ENCODE measurements at regions of chr22 and their contacts with region 1.

Region 1: DNA sequence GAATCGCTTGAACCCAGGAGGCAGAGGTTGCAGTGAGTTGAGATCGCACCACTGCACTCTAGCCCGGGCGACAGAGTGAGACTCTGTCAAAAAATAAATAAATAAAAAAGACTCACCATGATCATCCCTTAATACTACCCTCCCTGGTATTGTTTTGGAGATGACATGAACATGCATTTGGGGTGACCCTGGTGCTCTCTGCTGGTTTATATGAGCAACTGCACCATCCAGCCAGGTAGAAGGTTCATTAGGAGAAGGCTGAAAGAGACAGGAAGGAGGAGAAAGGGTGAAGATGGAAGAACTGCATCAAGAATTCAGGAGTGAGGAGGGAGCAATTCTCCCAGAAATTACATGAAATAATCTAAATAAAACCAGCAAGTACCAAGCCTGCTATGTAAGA is 37.8 kb downstream of the SLC5A1 start:
- DNase-seq: peak; percentile 60
- ATAC-seq: peak; percentile 69
- H3K4me3 ChIP-seq: no peak overlapping the region
- H3K27ac ChIP-seq: no peak overlapping the region
- H3K4me1 ChIP-seq: no peaks in the 10 kb centered on the region
- H3K27me3 ChIP-seq: peaks cover 5% of the 10 kb centered on the region
- CTCF ChIP-seq: peak; percentile 75

Region 2: DNA sequence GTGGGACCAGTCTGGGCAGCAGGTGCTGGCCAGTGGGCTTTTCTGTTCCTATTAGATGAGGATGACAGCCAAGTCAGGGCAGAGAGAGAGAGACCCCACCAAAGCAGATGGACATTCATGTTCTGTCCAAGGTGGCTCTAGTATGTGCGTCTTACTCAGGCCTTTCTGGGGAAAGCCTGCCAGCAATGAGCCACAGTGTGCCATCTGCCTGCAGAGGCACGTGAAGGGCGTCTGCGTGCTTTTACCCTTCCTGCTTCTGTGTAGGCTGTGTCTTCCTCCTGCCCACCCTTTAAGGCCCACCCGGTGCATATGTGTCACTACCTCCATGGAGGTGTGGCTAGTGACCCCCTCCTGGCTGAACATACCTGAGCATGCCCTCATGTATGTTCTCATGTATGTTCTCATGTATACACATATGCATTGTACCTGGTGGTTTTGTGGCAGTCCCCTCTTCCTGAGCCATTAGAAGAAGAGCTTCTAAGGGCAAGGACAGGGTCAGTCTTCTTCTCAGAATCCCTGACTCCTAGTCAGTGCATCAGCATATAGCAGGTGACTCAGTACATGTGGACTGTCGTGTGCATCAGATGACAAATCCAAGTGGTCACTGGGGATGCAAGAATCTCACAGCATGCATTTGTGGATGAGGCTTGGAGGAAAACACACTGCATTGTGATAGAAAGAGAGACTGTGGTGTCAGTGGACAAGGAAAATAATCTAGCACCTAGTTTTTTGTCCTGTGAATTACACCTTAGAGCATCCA is 227.0 kb before region 1 on chr22:
- CTCF ChIA-PET with region 1: interaction called, 14 read pairs
- POLR2A ChIA-PET with region 1: no interaction called
- intact Hi-C with region 1: no loop called
- DNase-seq: no peak
- ATAC-seq: no peak
- H3K4me3 ChIP-seq: no peak overlapping the region
- H3K27ac ChIP-seq: no peak overlapping the region
- H3K4me1 ChIP-seq: no peaks in the 10 kb centered on the region
- H3K27me3 ChIP-seq: no peaks in the 10 kb centered on the region
- CTCF ChIP-seq: no peak

Region 3: GRCh38 chr22:31977141-31977841 is 103.6 kb before region 1 on chr22:
- CTCF ChIA-PET with region 1: interaction called, 4 read pairs
- POLR2A ChIA-PET with region 1: no interaction called
- intact Hi-C with region 1: loop called (anchors 1 kb)
- DNase-seq: peak; percentile 80
- ATAC-seq: peak; percentile 97
- H3K4me3 ChIP-seq: no peak overlapping the region
- H3K27ac ChIP-seq: no peak overlapping the region
- H3K4me1 ChIP-seq: no peaks in the 10 kb centered on the region
- H3K27me3 ChIP-seq: no peaks in the 10 kb centered on the region
- CTCF ChIP-seq: peak; percentile 80